SK-N-SH (cell line): ENCODE measurements at regions of chr12 and their contacts with region 1.

Region 1: DNA sequence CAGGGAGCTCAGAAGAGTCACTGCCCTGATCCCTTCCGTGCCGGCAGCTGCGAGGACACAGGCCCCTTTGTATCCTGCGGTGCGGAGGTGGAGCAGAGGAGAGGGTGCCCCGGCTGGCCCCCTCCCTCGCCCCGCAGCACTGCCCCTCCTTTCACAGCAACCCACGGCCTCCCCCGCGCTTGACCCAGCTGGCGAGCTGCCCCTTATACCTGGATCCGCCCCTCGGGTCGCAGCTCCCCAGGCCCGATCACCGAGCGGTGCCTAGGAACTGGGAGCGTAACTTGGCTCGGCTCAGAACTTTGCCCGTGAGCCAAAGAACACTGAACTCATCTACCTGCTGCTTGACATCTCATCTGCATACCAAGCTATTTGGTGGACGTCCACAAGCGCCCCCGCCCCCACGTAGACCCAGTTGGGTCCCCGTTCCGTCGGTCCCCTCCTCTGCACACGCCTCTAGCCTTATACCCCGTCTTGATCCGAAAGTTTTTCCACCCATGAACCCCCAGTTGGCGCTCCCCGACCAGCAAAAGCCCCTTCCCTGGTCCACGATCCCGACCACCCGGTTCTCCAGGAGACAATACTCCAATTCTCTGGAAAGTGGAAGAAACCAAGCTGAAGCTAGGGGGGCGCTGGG is 697 bp upstream of the DNAJC14 start:
- DNase-seq: peak; percentile 79
- H3K4me3 ChIP-seq: peak overlapping the region; percentile 89 to 92
- H3K27ac ChIP-seq: peak overlapping the region; percentile 84
- H3K4me1 ChIP-seq: peaks cover 4 to 45% of the 10 kb centered on the region in 2 experiments; a peak in 3 of 4 replicates
- H3K27me3 ChIP-seq: no peaks in the 10 kb centered on the region
- CTCF ChIP-seq: no peak
- EP300 ChIP-seq: no peak; a peak in 1 of 4 replicates
- RAD21 ChIP-seq: peak; percentile 39; the same call in 1 of the 2 replicates

Region 2: DNA sequence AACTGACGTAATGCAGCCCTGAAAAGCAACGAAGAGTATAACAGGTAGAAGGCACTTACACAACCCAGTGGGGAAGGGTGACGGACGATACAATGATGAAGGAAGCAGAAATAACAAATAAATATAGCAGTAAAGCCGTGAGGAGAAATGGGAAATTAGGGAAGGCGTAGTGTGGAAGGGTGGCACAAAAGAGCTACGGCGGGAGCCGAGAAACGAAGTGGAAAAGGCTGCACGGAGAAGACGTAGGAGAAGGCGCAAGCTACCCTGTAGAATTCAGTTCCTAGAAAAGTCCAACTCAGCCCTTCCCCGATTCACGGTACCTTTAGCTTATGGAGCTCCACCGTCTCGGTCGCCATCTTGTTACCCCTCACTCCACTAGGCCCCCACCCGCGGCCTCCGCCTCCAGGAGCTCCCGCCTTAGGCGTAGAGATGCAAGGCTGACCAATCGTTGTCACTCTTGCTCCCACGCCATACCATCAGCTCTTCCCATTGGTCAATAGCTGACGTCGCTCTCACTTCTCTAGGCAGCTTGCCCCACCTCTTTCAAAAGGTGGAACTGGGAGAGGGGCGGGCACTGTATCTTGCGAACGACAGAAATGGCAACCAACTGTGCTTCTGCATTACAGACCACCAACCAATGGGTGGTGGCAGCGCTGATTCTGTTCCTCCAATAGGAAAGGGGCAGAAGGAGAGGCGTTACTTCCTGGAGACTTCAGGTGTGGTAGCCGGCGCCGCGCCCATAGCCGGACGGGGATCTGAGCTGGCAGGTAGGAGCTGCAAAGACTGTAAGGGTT is 12.5 kb before region 1 on chr12 and contains the starts of genes ORMDL2 and SARNP:
- CTCF ChIA-PET with region 1: interaction called, 11 read pairs
- POLR2A ChIA-PET with region 1: interaction called, 54 read pairs
- DNase-seq: peak; percentile 91
- H3K4me3 ChIP-seq: peak within 1 kb of the TSS; percentile 87 to 96
- H3K27ac ChIP-seq: peak within 1 kb of the TSS; percentile 76 to 85
- H3K4me1 ChIP-seq: peaks cover 8 to 11% of the 10 kb centered on the region in 2 experiments
- H3K27me3 ChIP-seq: no peaks in the 10 kb centered on the region
- CTCF ChIP-seq: no peak
- EP300 ChIP-seq: no peak
- RAD21 ChIP-seq: no peak
- polyA plus RNA-seq, gene ORMDL2: 35.2 and 37.3 TPM in 2 replicates
- polyA plus RNA-seq, gene SARNP: 65.8 and 66.9 TPM in 2 replicates

Region 3: DNA sequence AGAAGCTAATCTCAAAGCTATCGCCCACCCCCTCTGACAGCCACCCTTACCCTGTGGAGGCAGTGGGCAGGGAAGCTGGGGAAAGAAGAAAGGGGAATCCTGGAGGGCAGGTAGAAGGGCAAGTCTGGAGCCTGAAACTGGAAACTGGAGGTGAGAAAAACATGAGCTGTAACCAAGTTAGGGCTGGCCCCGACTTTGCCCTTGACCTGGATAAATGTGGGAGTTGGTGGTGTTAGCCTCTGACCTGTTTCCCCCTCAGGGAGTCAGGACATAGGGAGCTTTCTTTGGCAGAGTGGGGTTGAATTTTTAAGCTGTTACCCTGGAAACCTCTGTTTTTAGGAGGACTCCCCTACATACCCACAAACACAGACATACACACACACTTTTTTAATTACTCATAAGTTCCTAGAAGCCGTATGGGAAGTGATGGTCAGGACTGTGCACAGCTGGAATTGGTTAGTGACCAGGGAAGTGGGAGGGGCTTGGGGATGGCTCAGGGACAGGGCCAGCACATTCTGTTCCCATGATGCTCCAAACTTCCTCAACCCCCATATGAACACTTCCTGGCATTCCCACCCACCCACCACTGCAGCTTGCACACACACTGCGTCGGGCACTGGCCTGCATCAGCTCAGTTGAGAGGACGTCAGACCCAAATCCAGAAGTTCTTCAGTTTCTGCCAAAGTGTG is 17.7 kb after region 1 on chr12:
- CTCF ChIA-PET with region 1: interaction called, 6 read pairs
- POLR2A ChIA-PET with region 1: interaction called, 29 read pairs
- DNase-seq: peak; percentile 89
- H3K4me3 ChIP-seq: peak overlapping the region; percentile 28 to 30; a peak in 3 of 4 replicates
- H3K27ac ChIP-seq: peak overlapping the region; percentile 96 to 100
- H3K4me1 ChIP-seq: peaks cover 14 to 16% of the 10 kb centered on the region in 2 experiments; a peak in 3 of 4 replicates
- H3K27me3 ChIP-seq: no peaks in the 10 kb centered on the region
- CTCF ChIP-seq: no peak
- EP300 ChIP-seq: no peak; a peak in 1 of 4 replicates
- RAD21 ChIP-seq: no peak

Region 4: GRCh38 chr12:55973598-55974307 is 143.7 kb after region 1 on chr12 and contains the start of gene RAB5B:
- CTCF ChIA-PET with region 1: no interaction called
- POLR2A ChIA-PET with region 1: interaction called, 15 read pairs
- DNase-seq: peak; percentile 94
- H3K4me3 ChIP-seq: peak within 1 kb of the TSS; percentile 69 to 94
- H3K27ac ChIP-seq: peak within 1 kb of the TSS; percentile 83 to 94
- H3K4me1 ChIP-seq: peaks cover 7% of the 10 kb centered on the region in 2 experiments; a peak in 3 of 4 replicates
- H3K27me3 ChIP-seq: no peaks in the 10 kb centered on the region
- CTCF ChIP-seq: no peak
- EP300 ChIP-seq: no peak
- RAD21 ChIP-seq: no peak
- polyA plus RNA-seq, gene RAB5B: 54.0 and 79.4 TPM in 2 replicates